ENCODE measurements at regions of chr20 and their contacts with region 1.

Region 1: DNA sequence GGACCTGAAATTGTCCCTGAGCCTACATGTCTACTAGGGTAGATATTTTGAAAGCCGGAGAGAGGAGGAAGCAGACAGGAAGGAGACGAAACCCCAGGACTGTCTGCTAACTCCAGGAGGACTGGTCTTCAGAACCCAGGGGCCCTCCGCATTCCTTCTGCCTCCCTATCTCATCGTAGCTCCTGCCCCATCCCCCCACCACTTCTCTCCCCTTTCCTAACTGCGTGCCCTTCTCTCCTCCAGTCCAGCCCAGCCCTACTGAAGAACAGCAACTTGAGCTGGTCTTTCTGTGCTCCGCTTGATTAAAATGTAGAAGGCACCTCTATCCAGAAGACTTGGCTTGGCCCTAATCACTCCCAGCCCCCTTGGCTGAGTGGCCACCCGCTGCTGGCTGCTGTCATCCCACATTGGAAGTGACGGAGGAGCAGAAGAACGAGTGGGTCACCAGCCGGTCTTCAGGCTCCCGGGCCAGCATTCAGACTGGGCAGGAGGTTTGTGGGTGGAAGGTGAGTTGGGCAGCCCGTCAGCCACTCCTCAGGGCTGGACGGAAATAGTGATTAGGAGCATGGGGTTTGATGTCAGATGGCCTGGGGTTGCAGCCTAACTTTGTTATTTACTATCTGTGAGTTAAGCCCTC is 28.8 kb upstream of the ANGPT4 start:
- DNase-seq: no peak
- H3K4me3 ChIP-seq: no peak overlapping the region
- H3K27ac ChIP-seq: no peak overlapping the region
- H3K4me1 ChIP-seq: no peaks in the 10 kb centered on the region
- H3K27me3 ChIP-seq: peaks cover 0 to 27% (median 0%) of the 10 kb centered on the region in 4 donors
- CTCF ChIP-seq: no peak
- POLR2A ChIP-seq: no peak

Region 2: GRCh38 chr20:833450-834150 is 111.3 kb before region 1 on chr20 and contains the start of gene FAM110A:
- intact Hi-C with region 1: no loop called
- DNase-seq: peak; percentile 80
- H3K4me3 ChIP-seq: peak within 1 kb of the TSS; percentile 71 to 93 (median 80)
- H3K27ac ChIP-seq: peak within 1 kb of the TSS; percentile 88 to 91 (median 88)
- H3K4me1 ChIP-seq: peaks cover 16 to 60% (median 21%) of the 10 kb centered on the region in 3 donors
- H3K27me3 ChIP-seq: no peaks in the 10 kb centered on the region
- CTCF ChIP-seq: no peak
- POLR2A ChIP-seq: peak in 2 of 4 donors; percentile 31 to 45
- total RNA-seq, gene FAM110A: 15.3 to 46.6 (median 27.1) TPM

Region 3: DNA sequence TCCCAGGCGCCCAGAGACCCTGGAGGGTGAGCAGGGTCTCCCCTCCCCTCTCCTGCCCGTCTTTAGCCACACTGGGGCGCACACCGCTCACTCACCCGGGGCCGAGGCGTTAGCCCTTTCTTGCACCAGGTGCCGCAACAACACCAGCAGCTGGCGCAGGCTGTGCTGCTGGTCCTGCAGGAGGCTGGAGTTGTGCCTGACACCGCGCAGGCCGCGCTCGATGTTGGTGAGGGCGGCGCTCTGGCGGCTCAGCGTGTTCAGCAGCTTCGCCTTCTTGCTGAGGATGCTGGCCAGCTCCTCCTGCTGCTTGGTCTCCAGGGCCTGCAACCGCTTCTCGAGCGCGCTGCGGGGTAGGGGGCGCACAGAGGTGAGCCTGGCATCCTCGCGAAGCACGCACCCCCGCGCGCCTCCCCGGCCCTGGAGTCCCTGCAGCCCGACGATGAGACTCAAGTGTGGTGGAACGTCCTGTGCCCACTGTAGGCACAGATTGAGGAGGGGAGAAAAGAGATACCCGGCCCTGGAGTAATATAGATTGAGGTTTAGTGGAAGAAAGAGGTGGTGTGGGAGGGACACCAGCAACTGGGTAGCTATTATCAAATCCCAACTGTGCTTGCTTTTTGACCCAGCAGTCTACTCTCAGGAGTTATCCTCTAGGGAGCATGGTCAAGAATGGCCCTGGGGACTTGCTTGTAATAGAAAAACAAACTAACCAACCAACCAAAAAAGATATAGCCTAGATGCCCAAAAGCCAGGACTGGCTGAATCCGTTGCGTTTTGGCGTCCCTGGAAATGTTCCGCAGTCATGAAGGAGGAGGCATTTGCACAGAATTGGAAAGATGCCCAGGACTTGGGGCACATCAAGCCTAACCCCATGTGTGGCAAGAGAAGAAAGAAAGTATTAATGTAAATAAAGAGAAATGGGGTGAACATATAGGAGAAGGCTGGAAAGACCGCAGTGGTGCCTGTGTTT is 59.6 kb before region 1 on chr20:
- intact Hi-C with region 1: loop called (anchors 10 kb)
- DNase-seq: no peak
- H3K4me3 ChIP-seq: no peak overlapping the region
- H3K27ac ChIP-seq: no peak overlapping the region
- H3K4me1 ChIP-seq: peaks cover 0 to 16% (median 5%) of the 10 kb centered on the region in 3 donors
- H3K27me3 ChIP-seq: peaks cover 0 to 40% (median 0%) of the 10 kb centered on the region in 4 donors
- CTCF ChIP-seq: peak in 2 of 6 experiments; percentile 6 to 17
- POLR2A ChIP-seq: no peak

Region 4: GRCh38 chr20:896501-897034 is 48.3 kb before region 1 on chr20:
- intact Hi-C with region 1: no loop called
- DNase-seq: no peak
- H3K4me3 ChIP-seq: no peak overlapping the region
- H3K27ac ChIP-seq: no peak overlapping the region
- H3K4me1 ChIP-seq: peaks cover 0 to 2% (median 0%) of the 10 kb centered on the region in 3 donors
- H3K27me3 ChIP-seq: no peaks in the 10 kb centered on the region
- CTCF ChIP-seq: no peak
- POLR2A ChIP-seq: no peak

Region 5: DNA sequence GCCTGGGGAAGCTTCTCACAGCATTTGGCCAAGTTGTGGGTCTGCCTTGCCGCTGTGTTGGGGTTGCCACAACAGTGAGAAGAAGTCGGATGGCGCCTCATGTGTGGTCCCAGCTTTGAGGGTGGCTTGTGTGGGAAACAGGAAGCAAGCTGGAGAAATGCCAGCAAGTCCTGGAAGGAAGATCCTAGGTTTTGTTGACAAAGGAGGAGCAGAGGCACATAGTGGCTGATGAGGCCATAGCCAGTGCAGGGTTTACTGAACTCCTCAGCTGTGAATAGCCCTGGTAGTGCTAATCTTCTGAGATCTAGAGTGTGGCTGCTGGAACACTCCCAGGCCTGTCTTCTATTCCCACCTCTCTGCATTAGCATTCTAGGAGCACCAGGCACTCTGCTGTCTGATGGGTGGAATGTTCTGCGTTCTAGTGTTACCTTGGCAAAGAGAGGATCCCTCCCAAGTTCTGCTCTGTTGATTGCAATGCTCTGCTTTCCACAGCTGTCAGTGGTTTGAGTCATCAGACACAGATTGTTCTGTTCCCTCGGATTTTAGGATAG is 346.4 kb after region 1 on chr20:
- intact Hi-C with region 1: no loop called
- DNase-seq: no peak
- H3K4me3 ChIP-seq: no peak overlapping the region
- H3K27ac ChIP-seq: no peak overlapping the region
- H3K4me1 ChIP-seq: no peaks in the 10 kb centered on the region
- H3K27me3 ChIP-seq: no peaks in the 10 kb centered on the region
- CTCF ChIP-seq: no peak
- POLR2A ChIP-seq: no peak